ENCODE measurements at regions of chr11 and their contacts with region 1.

Region 1: DNA sequence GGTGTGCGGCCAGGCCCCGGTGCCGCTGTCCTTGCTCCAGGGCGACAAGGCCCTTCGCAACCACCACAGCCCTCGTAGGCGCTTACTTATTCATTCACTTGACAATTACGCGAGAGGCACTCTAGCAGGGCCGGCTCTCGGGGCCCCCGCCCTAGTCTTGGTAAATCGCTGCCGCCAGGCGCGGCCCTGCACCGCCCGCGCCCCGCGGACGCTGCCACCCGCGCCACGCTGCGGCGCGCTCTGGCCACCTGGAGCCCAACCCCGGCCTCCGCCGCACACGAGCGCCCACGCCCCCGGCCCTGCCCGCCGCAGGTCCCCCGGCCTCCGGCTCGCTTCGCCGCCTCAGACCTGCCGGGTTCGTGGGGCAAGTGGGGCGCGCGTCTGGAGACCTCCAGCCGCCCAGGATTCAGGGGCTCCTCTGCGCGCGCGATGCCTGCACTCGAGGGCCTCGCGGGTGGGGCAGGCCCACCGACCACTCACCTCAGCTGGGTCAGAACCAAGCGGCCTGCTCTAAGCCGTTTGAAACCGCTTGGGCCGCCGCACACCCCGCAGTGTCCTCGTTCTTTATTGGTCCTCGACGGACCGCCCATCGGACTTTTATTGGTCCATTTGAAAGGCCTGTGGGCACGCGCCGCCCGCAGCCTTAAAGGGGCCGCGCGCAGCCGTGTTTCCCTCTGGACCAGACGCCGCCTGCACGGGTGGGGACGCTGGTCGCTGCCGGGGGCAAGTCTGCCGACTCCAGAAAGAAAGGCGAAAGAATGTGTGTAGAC is at the start of gene CKAP5:
- DNase-seq: peak; percentile 87
- ATAC-seq: peak; percentile 94
- H3K4me3 ChIP-seq: peak within 1 kb of the TSS; percentile 88
- H3K27ac ChIP-seq: peak within 1 kb of the TSS; percentile 75
- H3K4me1 ChIP-seq: peaks cover 1% of the 10 kb centered on the region; the same call in 1 of the 2 replicates
- H3K27me3 ChIP-seq: no peaks in the 10 kb centered on the region
- CTCF ChIP-seq: 0 out of 2 replicates have a peak, but pooled peaks have one; percentile 7
- POLR2A ChIP-seq: peak; percentile 59; the same call in 1 of the 2 replicates
- RAD21 ChIP-seq: no peak
- total RNA-seq, gene CKAP5: 79.2 and 82.8 TPM in 2 replicates

Region 2: DNA sequence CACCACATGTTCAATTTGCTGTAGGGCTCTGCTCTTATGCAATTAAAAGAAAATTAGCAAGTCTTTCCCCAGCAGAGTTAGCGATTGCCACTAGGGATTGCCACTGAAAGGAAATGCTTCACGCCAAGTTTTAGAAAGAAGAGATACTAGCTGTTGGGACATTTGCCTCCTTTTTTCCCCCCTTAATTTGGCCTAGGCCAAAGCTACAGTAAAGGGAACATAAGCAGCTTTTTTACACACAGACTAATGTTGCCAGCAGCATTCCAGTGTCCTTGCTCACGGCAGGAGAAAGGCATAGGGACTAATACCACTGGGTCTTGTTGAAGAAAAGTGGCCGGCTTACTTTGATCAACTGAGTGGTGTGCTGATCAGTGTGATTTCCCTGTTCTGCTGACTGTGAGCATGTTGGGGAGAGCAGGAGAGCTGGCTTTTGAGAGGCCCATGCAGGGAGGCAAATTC is 795.9 kb before region 1 on chr11:
- CTCF ChIA-PET with region 1: interaction called, 11 read pairs
- POLR2A ChIA-PET with region 1: no interaction called
- dilution Hi-C with region 1: no loop called
- in situ Hi-C with region 1: no loop called
- intact Hi-C with region 1: no loop called
- DNase-seq: peak; percentile 85
- ATAC-seq: peak; percentile 92
- H3K4me3 ChIP-seq: no peak overlapping the region
- H3K27ac ChIP-seq: peak overlapping the region; percentile 5
- H3K4me1 ChIP-seq: peaks cover 18% of the 10 kb centered on the region
- H3K27me3 ChIP-seq: no peaks in the 10 kb centered on the region
- CTCF ChIP-seq: no peak
- POLR2A ChIP-seq: no peak
- RAD21 ChIP-seq: no peak

Region 3: GRCh38 chr11:46826310-46827044 is 19.4 kb before region 1 on chr11:
- CTCF ChIA-PET with region 1: interaction called, 3 read pairs
- POLR2A ChIA-PET with region 1: no interaction called
- dilution Hi-C with region 1: no loop called
- in situ Hi-C with region 1: no loop called
- intact Hi-C with region 1: loop called (anchors 2 kb)
- DNase-seq: peak; percentile 68
- ATAC-seq: peak; percentile 99
- H3K4me3 ChIP-seq: peak overlapping the region; percentile 85
- H3K27ac ChIP-seq: peak overlapping the region; percentile 70
- H3K4me1 ChIP-seq: peaks cover 6% of the 10 kb centered on the region
- H3K27me3 ChIP-seq: no peaks in the 10 kb centered on the region
- CTCF ChIP-seq: no peak
- POLR2A ChIP-seq: no peak
- RAD21 ChIP-seq: no peak

Region 4: GRCh38 chr11:46889689-46890475 is 44.0 kb after region 1 on chr11:
- CTCF ChIA-PET with region 1: no interaction called
- POLR2A ChIA-PET with region 1: no interaction called
- dilution Hi-C with region 1: no loop called
- in situ Hi-C with region 1: no loop called
- intact Hi-C with region 1: no loop called
- DNase-seq: peak; percentile 73
- ATAC-seq: peak; percentile 97
- H3K4me3 ChIP-seq: no peak overlapping the region
- H3K27ac ChIP-seq: no peak overlapping the region
- H3K4me1 ChIP-seq: no peaks in the 10 kb centered on the region; the same call in 1 of the 2 replicates
- H3K27me3 ChIP-seq: no peaks in the 10 kb centered on the region
- CTCF ChIP-seq: peak; percentile 97
- POLR2A ChIP-seq: 0 out of 2 replicates have a peak, but pooled peaks have one; percentile 45
- RAD21 ChIP-seq: peak; percentile 99

Region 5: GRCh38 chr11:47067401-47067800 is 221.5 kb after region 1 on chr11:
- CTCF ChIA-PET with region 1: no interaction called
- POLR2A ChIA-PET with region 1: interaction called, 19 read pairs
- dilution Hi-C with region 1: no loop called
- in situ Hi-C with region 1: no loop called
- intact Hi-C with region 1: no loop called
- DNase-seq: no peak
- ATAC-seq: no peak; the same call in 1 of the 2 replicates
- H3K4me3 ChIP-seq: no peak overlapping the region
- H3K27ac ChIP-seq: no peak overlapping the region
- H3K4me1 ChIP-seq: peaks cover 1% of the 10 kb centered on the region; the same call in 1 of the 2 replicates
- H3K27me3 ChIP-seq: no peaks in the 10 kb centered on the region
- CTCF ChIP-seq: no peak
- POLR2A ChIP-seq: no peak
- RAD21 ChIP-seq: no peak